ENCODE measurements at regions of chr10 and their contacts with region 1.

Region 1: DNA sequence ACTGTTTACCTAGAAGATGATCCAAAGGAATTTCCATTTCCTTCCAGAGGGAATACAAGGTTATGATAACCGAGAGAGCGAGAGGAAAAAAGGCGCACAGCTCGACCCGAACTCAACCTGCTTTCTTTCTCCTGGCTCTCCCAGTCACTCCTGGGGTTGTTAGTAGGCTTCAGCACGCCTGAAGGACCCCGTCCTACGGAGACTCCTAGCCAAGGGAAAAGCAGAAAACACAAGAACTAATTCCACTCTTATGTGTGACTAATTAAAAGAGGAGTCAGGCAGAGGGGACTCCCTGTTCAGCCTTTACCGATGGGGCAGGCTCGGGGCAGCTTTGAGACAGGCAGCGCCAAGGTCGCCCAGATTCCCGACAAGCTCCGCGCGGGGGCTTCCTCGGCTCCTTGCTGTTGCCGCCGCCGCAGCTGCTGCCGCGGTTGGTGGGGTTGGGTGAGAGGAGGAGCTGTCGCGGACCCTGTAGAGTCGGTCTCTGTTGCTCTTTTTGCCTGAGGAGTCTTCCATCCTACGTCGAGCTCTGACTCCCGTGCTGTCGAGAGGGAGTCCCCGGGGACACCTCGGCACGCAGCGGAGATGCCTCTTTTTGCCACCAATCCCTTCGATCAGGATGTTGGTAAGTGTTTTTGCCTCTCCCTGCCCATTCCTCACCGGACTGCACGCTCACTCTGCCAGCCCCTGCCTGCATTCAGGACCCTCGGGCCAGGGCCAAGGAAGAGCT is at the start of gene STAM:
- DNase-seq: peak; percentile 95
- H3K4me3 ChIP-seq: peak within 1 kb of the TSS; percentile 67 to 97 (median 82)
- H3K27ac ChIP-seq: peak within 1 kb of the TSS; percentile 90 to 98 (median 96)
- H3K4me1 ChIP-seq: peaks cover 32 to 55% (median 52%) of the 10 kb centered on the region in 4 donors
- H3K27me3 ChIP-seq: no peaks in the 10 kb centered on the region
- CTCF ChIP-seq: no peak
- EP300 ChIP-seq: no peak
- POLR2A ChIP-seq: peak; percentile 25
- total RNA-seq, gene STAM: 15.6 to 18.8 (median 17.4) TPM

Region 2: DNA sequence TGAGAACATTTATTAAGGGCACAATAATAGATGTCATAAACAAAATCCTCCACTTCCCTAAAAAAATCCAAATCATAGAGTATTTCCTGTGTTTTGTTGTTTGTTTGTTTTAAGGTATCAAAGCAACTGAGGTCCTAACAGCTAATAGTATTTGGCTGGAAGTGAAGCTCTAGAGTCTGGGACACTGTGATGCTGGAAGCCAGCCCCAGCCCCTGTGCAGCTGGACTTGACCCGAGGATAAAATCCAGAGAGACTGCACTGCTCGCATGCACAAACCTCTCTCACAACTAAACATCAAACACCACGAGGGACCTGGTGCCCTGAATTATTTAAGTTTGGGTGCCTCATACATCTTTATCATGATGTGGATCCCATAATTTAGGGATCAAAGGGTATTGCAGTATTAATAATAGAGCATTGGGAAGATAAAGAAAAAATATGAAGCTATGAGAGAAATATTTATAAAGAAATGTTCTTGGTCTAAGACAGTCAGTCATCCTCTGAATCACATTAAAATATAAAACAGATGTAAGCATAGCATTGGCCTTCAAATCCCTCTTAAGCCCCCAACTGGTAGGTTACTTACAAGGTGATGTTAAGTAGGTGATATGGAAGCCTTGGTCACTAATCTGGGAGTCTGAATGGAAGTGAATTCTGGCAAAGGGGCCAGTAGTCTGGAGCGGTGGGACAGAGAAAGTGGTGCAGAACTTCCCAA is 558.8 kb before region 1 on chr10:
- intact Hi-C with region 1: no loop called
- DNase-seq: no peak
- H3K4me3 ChIP-seq: no peak overlapping the region
- H3K27ac ChIP-seq: no peak overlapping the region
- H3K4me1 ChIP-seq: peaks cover 0 to 7% (median 2%) of the 10 kb centered on the region in 4 donors
- H3K27me3 ChIP-seq: no peaks in the 10 kb centered on the region
- CTCF ChIP-seq: no peak
- EP300 ChIP-seq: no peak
- POLR2A ChIP-seq: no peak

Region 3: DNA sequence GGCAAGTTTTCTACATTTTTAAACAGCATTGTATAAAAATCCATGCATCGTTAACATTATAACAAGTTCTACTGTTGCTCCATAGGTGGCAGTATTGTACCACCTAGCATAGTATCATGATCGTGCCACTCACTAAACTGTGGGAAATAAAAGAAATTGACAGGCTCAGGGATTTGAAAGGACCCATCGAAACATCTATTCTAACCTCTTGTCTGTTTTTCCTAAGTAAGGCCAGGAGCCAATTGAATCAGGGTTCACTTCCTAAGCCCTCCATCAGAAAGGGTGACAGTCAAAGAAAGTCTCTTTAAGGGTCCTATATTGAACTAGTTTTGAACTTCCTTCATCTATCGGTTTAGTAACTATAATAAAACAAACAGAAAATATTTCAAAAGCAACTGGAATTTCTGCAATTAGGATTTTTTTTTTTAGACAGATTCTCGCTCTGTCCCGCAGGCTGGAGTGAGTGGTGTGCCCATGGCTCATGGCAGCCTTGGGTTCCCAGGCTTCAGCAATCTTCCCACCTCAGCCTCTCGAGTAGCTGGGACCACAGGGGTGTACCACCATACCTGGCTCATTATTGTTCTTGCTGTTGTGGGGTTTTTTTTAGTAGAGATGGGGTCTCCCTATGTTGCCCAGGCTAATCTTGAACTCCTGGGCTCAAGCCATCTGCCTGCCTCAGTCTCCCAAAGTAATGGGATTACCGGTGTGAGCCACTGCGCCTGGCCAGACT is 36.2 kb before region 1 on chr10:
- intact Hi-C with region 1: loop called (anchors 5 kb)
- DNase-seq: no peak
- H3K4me3 ChIP-seq: no peak overlapping the region
- H3K27ac ChIP-seq: no peak overlapping the region
- H3K4me1 ChIP-seq: peaks cover 6 to 21% (median 19%) of the 10 kb centered on the region in 4 donors
- H3K27me3 ChIP-seq: no peaks in the 10 kb centered on the region
- CTCF ChIP-seq: peak; percentile 75 to 89 (median 84)
- EP300 ChIP-seq: no peak
- POLR2A ChIP-seq: no peak

Region 4: GRCh38 chr10:17617031-17617911 is 26.6 kb before region 1 on chr10 and contains the start of gene HACD1:
- intact Hi-C with region 1: loop called (anchors 2 kb)
- DNase-seq: no peak
- H3K4me3 ChIP-seq: peak within 1 kb of the TSS; percentile 77 to 99 (median 84)
- H3K27ac ChIP-seq: peak within 1 kb of the TSS; percentile 94 to 100 (median 96)
- H3K4me1 ChIP-seq: peaks cover 6 to 32% (median 25%) of the 10 kb centered on the region in 4 donors
- H3K27me3 ChIP-seq: no peaks in the 10 kb centered on the region
- CTCF ChIP-seq: peak in 2 of 3 experiments; percentile 16 to 32
- EP300 ChIP-seq: no peak
- POLR2A ChIP-seq: peak; percentile 34
- total RNA-seq, gene HACD1: 51.9 to 79.9 (median 71.2) TPM